ENCODE measurements at regions of chr19 and their contacts with region 1.

Region 1: GRCh38 chr19:28493884-28494283 is 719.1 kb downstream of the UQCRFS1 start:
- DNase-seq: no peak
- ATAC-seq: no peak
- H3K4me3 ChIP-seq: no peak overlapping the region
- H3K27ac ChIP-seq: no peak overlapping the region
- H3K4me1 ChIP-seq: no peaks in the 10 kb centered on the region
- H3K27me3 ChIP-seq: peaks cover 0 to 11% (median 0%) of the 10 kb centered on the region in 7 donors
- CTCF ChIP-seq: no peak

Region 2: GRCh38 chr19:28393574-28394336 is 100.1 kb before region 1 on chr19:
- intact Hi-C with region 1: no loop called
- DNase-seq: no peak
- ATAC-seq: no peak
- H3K4me3 ChIP-seq: no peak overlapping the region
- H3K27ac ChIP-seq: no peak overlapping the region
- H3K4me1 ChIP-seq: peaks cover 0 to 6% (median 0%) of the 10 kb centered on the region in 9 donors
- H3K27me3 ChIP-seq: peaks cover 0 to 7% (median 7%) of the 10 kb centered on the region in 7 donors
- CTCF ChIP-seq: no peak

Region 3: GRCh38 chr19:28553005-28553404 is 59.1 kb after region 1 on chr19:
- intact Hi-C with region 1: no loop called
- DNase-seq: no peak
- ATAC-seq: no peak
- H3K4me3 ChIP-seq: no peak overlapping the region
- H3K27ac ChIP-seq: no peak overlapping the region
- H3K4me1 ChIP-seq: no peaks in the 10 kb centered on the region
- H3K27me3 ChIP-seq: no peaks in the 10 kb centered on the region
- CTCF ChIP-seq: no peak

Region 4: GRCh38 chr19:29302002-29302928 is 808.4 kb after region 1 on chr19:
- intact Hi-C with region 1: loop called in 1 of 10 experiments (anchors 5 kb)
- DNase-seq: no peak
- ATAC-seq: no peak
- H3K4me3 ChIP-seq: no peak overlapping the region
- H3K27ac ChIP-seq: no peak overlapping the region
- H3K4me1 ChIP-seq: no peaks in the 10 kb centered on the region
- H3K27me3 ChIP-seq: peaks cover 0 to 30% (median 13%) of the 10 kb centered on the region in 7 donors
- CTCF ChIP-seq: no peak

Measured in heart right ventricle (tissue), 16 donors.